ENCODE measurements at regions of chr17 and their contacts with region 1.

Region 1: DNA sequence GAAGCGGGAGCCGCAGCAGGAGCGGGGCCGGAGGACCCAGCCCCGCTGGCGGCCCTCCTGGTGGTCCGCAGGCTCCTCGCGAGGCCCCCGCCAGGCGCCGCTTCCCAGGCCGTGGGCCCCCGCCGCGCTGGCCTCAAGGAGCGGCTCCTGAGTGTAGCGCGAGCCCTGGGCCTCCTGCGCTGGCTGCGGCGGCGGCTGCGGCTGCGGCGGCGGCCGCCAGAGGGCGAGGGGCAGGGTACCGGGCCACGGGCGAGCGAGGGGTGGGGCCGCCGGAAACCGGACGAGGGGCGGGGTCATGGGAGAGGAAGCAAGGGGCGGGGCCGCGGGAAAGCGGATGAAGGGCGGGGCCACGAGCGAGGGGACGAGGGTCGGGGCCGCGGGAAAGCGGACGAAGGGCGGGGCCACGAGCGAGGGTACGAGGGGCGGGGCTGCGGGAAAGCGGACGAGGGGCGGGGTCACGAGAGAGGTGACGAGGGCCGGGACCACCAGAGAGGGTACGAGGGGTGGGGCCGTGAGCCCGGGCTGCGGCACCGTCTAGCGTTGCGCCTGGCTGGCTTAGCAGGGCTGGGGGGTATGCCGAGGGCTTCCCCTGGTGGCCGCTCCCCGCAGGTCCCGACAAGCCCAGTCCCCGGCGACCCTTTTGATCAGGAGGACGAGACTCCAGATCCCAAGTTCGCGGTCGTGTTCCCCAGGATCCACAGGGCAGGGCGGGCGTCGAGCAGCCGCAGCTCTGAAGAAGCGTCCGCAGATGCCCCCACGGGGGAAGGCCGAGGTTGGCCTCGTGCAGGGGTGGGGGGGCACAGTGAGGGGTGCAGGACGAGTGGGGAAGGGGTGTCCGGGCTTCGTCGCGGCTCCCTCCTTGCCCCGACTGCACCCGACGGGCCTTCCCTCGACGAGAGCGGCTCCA is 1.7 kb downstream of the MYO15B start:
- DNase-seq: peak; percentile 99

Region 2: DNA sequence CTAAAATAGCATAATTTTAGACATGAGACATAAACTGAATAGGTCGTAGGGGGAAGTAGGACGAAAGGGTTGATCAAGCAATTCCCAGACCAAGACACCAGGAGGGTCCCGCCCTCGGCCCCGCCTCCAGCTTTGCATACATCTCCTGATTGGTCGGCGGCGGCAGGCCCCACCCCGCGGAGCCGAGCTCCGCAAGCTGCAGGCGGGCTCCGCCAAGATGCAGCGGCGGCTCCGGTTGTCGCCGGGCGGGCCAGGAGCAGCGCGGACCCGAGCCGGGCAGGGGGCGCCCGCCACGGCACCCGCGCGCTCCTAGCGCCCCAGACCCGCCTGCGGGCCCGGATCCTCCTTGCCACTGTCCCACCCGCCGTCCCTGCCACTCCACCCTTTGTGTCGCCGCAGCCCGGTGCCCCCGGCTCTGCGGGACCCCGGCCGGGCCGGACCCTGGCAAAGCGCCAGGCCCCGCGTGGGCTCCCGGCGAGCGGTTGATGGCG is 601.8 kb before region 1 on chr17 and contains the start of gene CDR2L:
- intact Hi-C with region 1: no loop called
- DNase-seq: peak; percentile 99
- total RNA-seq, gene CDR2L: 17.4 to 26.0 TPM

Region 3: DNA sequence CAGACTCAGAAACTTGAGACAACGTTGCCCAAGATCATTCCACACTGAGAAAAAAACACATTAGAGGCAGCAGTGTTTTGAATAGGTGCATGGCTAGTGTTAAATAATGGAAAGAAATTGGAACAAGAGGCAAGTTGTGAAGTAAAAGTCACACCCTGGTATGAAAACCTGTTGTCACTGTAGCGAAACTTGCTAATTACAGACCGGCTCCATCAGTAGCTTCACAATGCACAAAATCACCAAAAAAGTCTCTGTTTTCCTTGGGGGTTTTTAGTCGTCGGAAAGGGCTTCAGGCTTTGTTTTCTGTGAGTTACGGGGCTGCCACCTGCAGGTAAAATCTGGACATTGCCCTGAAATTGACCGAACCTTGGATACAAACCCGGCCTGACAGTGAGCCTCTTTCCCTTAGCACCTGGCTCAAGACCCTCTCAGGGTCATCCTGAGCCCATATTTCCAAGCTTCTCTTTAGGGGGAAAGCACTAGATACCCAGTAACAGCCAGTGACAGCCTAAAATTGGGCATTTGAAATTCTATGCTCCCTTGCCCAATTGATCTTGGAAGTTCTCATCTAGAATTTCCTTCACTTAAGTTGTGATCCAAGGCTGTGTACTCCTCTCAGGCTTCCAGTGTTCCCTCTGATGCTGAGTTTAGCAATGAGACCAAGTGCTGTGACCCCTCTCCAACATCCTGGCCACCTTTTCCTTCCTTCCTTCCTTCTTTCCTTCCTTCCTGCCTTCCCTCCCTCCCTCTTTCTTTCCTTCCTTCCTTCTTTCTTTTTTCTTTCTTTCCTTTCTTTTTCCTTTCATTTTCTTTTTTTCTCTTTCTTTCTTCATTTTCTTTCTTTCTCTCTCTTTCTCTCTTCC is 176.6 kb before region 1 on chr17:
- intact Hi-C with region 1: loop called in 1 of 2 experiments (anchors 5 kb)
- DNase-seq: no peak

Region 4: GRCh38 chr17:75428543-75429469 is 160.5 kb before region 1 on chr17:
- intact Hi-C with region 1: loop called in 1 of 2 experiments (anchors 10 kb)
- DNase-seq: no peak

Region 5: DNA sequence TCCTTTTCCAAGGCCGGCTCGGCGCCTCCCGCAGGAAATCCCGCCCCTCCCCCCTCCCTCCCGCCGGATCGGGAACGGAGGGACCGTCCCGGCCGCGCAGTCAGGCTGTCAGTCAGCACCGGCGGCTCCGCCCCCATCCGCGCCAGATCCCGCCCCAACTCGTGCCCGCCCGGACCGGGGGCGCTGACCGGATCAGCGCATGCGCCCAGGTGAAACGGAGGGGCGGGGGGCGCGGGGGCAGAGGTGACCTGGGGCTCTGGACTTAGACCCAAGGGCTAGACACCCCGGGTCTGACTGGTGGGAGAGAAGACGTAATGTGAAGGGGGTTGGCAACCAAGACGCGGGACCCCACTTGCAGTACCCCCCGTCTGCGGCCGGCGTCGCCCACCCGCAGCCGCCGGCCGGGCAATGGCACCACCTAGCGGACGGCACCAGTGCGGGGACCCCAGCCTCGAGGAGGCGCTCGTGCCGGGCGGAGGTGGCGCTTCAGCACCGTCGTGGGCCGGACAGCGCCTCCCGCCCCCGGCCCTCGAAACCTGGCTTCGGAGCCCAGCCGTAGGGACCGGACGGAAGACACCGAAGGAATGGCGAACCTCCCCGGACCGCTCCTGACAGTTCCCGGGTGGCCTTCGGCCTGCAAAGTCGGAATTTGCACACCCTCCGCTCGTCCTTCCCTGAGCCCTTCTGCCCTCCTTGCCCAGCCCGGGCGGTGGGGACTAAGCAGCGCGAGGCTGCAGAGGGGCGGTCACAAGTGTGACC is 73.6 kb before region 1 on chr17 and contains the start of gene CASKIN2:
- intact Hi-C with region 1: loop called in 1 of 2 experiments (anchors 5 kb)
- DNase-seq: peak; percentile 98
- total RNA-seq, gene CASKIN2: 51.1 to 57.6 TPM

Region 6: GRCh38 chr17:75571197-75571873 is 17.9 kb before region 1 on chr17:
- intact Hi-C with region 1: no loop called
- DNase-seq: no peak

Measured in posterior vena cava (tissue), 2 donors.